Breast epithelium (tissue), 4 donors: ENCODE measurements at regions of chr2 and their contacts with region 1.

Region 1: GRCh38 chr2:179235463-179236108 is 29.0 kb downstream of the SESTD1 start:
- DNase-seq: no peak
- H3K4me3 ChIP-seq: no peak overlapping the region
- H3K27ac ChIP-seq: no peak overlapping the region
- H3K4me1 ChIP-seq: no peaks in the 10 kb centered on the region
- H3K27me3 ChIP-seq: no peaks in the 10 kb centered on the region
- CTCF ChIP-seq: no peak
- POLR2A ChIP-seq: no peak

Region 2: GRCh38 chr2:179263446-179264367 is 28.1 kb after region 1 on chr2:
- intact Hi-C with region 1: loop called (anchors 2 kb)
- DNase-seq: peak; percentile 32 to 59
- H3K4me3 ChIP-seq: peak overlapping the region; percentile 76 to 85 (median 82)
- H3K27ac ChIP-seq: peak overlapping the region; percentile 96 to 98
- H3K4me1 ChIP-seq: peaks cover 2 to 3% of the 10 kb centered on the region in 2 donors
- H3K27me3 ChIP-seq: no peaks in the 10 kb centered on the region
- CTCF ChIP-seq: no peak
- POLR2A ChIP-seq: peak; percentile 42